Prostate gland (tissue), 2 donors: ENCODE measurements at regions of chr11 and their contacts with region 1.

Region 1: DNA sequence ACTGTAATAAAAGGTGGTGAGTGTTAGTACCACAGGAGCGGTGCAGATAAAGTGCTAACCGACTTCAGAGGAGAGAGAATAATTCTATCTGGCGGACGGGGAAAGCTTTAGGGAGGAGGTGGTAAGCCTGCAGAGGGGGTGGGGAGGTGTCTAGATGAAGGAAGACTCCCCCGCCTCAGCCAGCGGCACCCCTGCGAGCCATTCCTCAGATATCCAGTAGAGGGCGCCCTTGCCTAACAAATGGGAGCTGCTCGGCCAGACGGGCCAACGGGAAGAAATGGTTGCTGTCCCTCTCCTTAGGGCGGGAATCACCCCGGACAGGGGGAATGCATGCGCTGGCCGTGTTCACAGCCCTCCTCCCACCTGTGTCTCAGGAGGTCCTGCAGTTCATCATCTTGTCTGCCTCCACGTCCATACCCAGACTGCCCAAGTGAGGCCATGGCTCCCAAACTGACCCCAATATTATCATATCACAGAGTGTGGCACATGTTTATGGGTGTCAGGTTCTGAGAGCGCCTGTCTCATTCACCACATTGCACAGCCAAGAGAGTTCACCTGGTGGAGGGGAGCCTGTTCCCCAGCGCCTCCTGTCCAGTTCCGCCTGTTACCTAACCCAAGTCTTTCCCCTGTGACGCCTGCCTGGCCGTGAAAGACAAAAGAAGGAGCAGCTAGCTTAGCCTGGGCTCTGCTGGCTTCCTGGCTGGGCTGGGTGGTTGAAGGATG is 85.5 kb downstream of the ST3GAL4 start:
- DNase-seq: peak; percentile 59
- H3K4me3 ChIP-seq: no peak overlapping the region
- H3K27ac ChIP-seq: no peak overlapping the region
- H3K4me1 ChIP-seq: no peaks in the 10 kb centered on the region
- H3K27me3 ChIP-seq: no peaks in the 10 kb centered on the region
- CTCF ChIP-seq: peak; percentile 83 to 96 (median 92)
- POLR2A ChIP-seq: no peak

Region 2: DNA sequence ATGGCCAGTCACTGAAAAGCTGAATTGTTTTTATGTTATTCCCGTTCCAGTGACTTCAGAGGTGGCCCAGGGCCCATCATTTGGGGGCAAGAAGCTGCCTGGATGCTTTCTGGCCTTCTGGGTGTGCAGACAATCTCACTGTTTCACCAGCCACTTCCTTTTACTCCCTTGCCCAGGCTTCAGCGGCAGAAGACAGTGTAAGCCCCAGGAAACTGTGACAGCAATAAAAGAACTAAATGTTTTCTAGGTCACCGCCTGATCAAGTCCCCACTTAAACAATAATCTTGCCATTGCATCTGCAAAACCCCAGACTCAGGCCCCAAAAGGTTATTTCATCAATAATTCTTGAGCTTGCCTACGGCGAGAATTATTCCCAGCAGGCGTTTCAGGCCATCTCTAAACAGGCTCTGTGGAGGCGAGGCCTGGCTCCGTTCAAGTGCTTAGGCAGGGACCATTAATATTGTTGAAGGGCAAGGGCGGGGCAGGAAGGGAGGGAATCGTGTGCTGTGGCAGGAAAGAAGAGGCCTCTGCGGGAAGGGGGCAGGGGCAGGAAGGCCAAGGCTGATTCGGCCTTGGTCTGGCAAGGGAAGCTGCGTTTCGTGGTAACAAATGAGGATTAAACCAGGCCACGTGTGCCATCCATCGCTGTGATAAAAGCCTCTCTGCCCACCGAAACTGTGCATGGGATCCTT is 307.3 kb after region 1 on chr11:
- intact Hi-C with region 1: no loop called
- DNase-seq: no peak
- H3K4me3 ChIP-seq: no peak overlapping the region
- H3K27ac ChIP-seq: no peak overlapping the region
- H3K4me1 ChIP-seq: no peaks in the 10 kb centered on the region
- H3K27me3 ChIP-seq: no peaks in the 10 kb centered on the region
- CTCF ChIP-seq: no peak
- POLR2A ChIP-seq: no peak

Region 3: DNA sequence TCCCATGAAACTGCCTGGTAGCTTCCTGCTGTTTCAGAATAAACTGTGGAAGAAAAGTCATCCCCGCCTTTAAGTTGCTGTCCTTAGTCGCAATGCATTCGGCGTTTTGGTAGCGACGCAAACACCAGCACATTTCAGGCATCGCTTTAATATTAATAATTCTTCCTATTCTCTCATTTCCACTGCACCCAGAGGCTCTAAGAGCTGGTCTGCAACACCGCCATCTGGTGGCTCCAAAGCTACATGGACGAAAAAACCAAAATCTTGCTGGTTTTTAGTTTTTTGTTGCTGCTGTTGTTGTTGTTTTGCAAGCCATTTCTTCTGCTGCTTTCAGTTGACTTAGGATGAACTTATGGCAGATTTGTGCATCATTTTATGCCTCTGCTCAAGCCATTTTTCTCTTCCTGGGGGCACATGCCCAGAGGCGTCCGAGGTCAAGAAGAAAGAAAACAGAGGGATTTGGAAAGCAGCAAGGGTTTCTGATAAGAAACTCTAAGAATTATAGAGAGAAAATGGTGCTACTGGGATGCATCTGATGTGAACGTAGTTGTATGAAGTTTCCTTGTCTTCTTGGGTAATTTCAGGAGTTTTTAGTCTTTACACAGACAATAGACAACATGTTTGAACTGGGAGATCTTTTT is 905.0 kb after region 1 on chr11:
- intact Hi-C with region 1: loop called (anchors 10 kb)
- DNase-seq: peak; percentile 6
- H3K4me3 ChIP-seq: no peak overlapping the region
- H3K27ac ChIP-seq: no peak overlapping the region
- H3K4me1 ChIP-seq: no peaks in the 10 kb centered on the region
- H3K27me3 ChIP-seq: no peaks in the 10 kb centered on the region
- CTCF ChIP-seq: peak in 3 of 4 experiments; percentile 51 to 67 (median 59)
- POLR2A ChIP-seq: no peak